Left ventricle myocardium inferior (tissue), 1 donor: ENCODE measurements at regions of chr5 and their contacts with region 1.

Region 1: DNA sequence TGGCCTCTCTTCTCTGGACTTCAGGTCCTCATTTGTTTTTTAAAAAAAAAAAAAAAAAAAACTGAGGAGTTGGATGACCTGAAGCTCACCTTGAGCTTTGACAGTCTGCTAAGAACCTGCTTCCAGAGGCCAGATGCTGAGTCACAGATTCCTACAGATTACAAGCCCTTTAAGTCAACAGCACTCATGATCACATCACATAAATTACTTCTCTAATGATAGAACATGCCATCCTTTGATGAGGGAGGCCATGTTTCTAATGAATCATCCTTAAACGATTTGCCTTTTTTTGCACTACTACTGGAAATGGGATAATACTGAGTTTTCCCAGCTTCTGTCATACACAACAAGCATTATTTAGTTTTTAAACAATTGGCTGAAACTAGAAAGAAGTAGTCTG is 34.2 kb upstream of the MYOT start:
- DNase-seq: no peak
- H3K4me3 ChIP-seq: no peak overlapping the region
- H3K27ac ChIP-seq: peak overlapping the region; percentile 84
- H3K4me1 ChIP-seq: peaks cover 84% of the 10 kb centered on the region
- H3K27me3 ChIP-seq: no peaks in the 10 kb centered on the region
- CTCF ChIP-seq: no peak

Region 2: GRCh38 chr5:137688210-137688840 is 145.1 kb before region 1 on chr5:
- intact Hi-C with region 1: no loop called
- DNase-seq: no peak
- H3K4me3 ChIP-seq: no peak overlapping the region
- H3K27ac ChIP-seq: no peak overlapping the region
- H3K4me1 ChIP-seq: peaks cover 3% of the 10 kb centered on the region
- H3K27me3 ChIP-seq: no peaks in the 10 kb centered on the region
- CTCF ChIP-seq: no peak

Region 3: GRCh38 chr5:137888857-137889759 is 55.6 kb after region 1 on chr5 and contains the start of gene PKD2L2:
- intact Hi-C with region 1: loop called (anchors 10 kb)
- DNase-seq: peak; percentile 88
- H3K4me3 ChIP-seq: peak within 1 kb of the TSS; percentile 70
- H3K27ac ChIP-seq: peak within 1 kb of the TSS; percentile 94
- H3K4me1 ChIP-seq: peaks cover 49% of the 10 kb centered on the region
- H3K27me3 ChIP-seq: no peaks in the 10 kb centered on the region
- CTCF ChIP-seq: peak; percentile 40
- total RNA-seq, gene PKD2L2: 0.16 TPM

Region 4: DNA sequence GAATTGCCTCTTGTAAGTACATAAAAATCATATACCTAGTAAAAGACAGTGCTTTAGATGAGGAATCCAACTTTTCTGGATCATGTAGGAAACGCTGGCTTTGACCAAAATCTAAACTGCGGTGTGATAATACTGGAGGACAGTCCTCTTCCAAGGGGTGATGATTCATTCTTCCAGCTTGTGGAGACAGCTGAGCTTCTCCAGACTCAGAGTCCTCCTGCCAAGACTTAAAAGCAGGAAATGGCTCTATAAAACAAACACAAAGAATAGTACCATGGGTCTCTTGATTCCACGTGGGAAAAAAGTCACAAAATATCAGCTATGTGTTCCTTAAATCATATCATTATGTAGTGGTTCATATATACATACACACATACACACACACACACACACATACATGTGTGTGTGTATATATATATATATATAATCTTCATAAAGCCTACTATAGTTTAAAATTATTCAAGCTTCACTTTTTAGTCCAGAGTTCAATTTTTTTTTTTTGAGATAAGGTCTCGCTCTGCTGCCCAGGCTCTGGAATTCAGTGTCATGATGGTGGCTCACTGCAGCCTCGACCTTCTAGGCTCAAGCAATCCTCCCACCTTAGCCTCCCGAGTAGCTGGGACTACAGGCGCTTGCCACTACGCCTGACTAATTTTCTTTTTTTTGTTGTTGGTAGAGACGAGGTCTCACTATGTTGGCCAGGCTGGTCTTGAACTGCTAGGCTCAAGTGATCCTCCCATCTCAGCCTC is 120.8 kb after region 1 on chr5:
- intact Hi-C with region 1: no loop called
- DNase-seq: no peak
- H3K4me3 ChIP-seq: no peak overlapping the region
- H3K27ac ChIP-seq: peak overlapping the region; percentile 62
- H3K4me1 ChIP-seq: peaks cover 39% of the 10 kb centered on the region
- H3K27me3 ChIP-seq: no peaks in the 10 kb centered on the region
- CTCF ChIP-seq: no peak